Heart right ventricle (tissue), 16 donors: ENCODE measurements at regions of chr6 and their contacts with region 1.

Region 1: DNA sequence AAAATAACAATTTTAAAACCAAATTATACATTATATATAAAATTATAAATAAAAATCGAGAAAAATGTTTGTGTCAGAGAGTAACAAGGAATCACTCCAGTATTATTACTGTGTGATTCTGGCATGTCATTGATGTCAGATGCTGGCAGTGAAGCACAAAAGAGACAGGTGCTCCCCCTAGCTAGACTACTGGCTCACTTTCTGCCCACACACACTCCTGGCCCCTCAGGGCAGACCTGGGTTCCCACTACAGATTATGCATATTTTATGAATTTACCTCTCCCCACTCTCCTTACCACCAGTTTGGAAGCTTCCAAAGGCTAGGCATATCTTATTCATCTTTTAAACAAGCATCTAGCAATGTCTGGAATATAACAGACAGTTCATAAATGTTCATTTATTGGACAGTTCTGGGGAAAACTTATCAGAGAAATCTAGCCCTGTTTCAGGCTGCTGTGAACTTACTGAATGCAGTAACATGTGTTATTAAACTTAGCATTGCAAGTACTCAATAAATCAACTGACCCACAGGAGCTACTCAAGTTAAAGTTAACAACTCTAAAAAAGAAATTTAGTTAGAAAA is 12.8 kb downstream of the SNX3 start:
- DNase-seq: no peak
- ATAC-seq: no peak
- H3K4me3 ChIP-seq: no peak overlapping the region
- H3K27ac ChIP-seq: no peak overlapping the region
- H3K4me1 ChIP-seq: peaks cover 0 to 56% (median 30%) of the 10 kb centered on the region in 9 donors
- H3K27me3 ChIP-seq: no peaks in the 10 kb centered on the region
- CTCF ChIP-seq: no peak

Region 2: DNA sequence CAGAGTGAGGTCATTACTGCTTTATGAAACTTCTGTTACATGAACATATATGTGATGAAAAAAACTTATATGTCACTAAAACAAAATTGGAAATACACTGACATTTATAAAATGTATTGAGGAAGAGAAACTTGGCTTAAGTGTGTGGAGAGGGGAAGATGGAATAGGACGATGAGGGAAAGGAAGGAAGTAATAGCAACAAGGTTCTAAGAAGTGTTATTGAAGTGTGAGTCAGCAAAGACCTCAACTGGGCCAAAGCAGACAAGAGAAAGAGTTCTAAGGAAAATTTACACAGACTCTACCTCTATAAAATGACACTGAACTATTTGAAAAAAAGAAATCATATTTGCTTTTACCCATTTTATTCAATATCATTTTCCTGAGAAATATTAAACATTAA is 25.5 kb before region 1 on chr6:
- intact Hi-C with region 1: loop called in 1 of 10 experiments (anchors 2 kb)
- DNase-seq: no peak
- ATAC-seq: no peak
- H3K4me3 ChIP-seq: no peak overlapping the region
- H3K27ac ChIP-seq: no peak overlapping the region
- H3K4me1 ChIP-seq: peaks cover 0 to 16% (median 0%) of the 10 kb centered on the region in 9 donors
- H3K27me3 ChIP-seq: no peaks in the 10 kb centered on the region
- CTCF ChIP-seq: no peak

Region 3: DNA sequence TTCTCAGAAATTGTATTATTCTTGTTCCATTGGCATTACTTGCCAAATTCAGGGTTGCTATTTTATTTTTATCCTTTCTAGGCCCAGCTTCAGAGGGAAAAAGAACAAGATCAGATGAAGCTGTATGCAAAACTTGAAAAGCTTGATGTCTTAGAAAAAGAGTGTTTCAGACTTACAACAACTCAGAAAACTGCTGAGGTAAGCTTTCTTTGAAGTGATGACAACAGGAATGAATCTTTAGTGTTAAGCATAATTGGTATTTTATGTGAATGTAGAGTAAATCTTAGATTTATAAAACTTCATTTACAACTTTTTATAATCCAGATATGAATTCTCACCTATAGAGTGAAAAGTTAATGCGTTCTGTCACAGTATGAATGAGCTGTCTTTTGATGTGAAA is 905.7 kb after region 1 on chr6:
- intact Hi-C with region 1: no loop called
- DNase-seq: no peak
- ATAC-seq: no peak
- H3K4me3 ChIP-seq: no peak overlapping the region
- H3K27ac ChIP-seq: no peak overlapping the region
- H3K4me1 ChIP-seq: no peaks in the 10 kb centered on the region
- H3K27me3 ChIP-seq: no peaks in the 10 kb centered on the region
- CTCF ChIP-seq: no peak